ENCODE measurements at regions of chr1 and their contacts with region 1.

Region 1: GRCh38 chr1:183622884-183623785 is 12.4 kb downstream of the ARPC5 start:
- DNase-seq: peak; percentile 70
- ATAC-seq: peak; percentile 78
- H3K4me3 ChIP-seq: no peak overlapping the region
- H3K27ac ChIP-seq: peak overlapping the region; percentile 63
- H3K4me1 ChIP-seq: peaks cover 32% of the 10 kb centered on the region
- H3K27me3 ChIP-seq: no peaks in the 10 kb centered on the region
- CTCF ChIP-seq: peak; percentile 87

Region 2: GRCh38 chr1:183551904-183552303 is 71.2 kb before region 1 on chr1:
- CTCF ChIA-PET with region 1: no interaction called
- POLR2A ChIA-PET with region 1: no interaction called
- intact Hi-C with region 1: loop called (anchors 5 kb)
- DNase-seq: no peak
- ATAC-seq: no peak
- H3K4me3 ChIP-seq: no peak overlapping the region
- H3K27ac ChIP-seq: no peak overlapping the region
- H3K4me1 ChIP-seq: no peaks in the 10 kb centered on the region
- H3K27me3 ChIP-seq: no peaks in the 10 kb centered on the region
- CTCF ChIP-seq: no peak

Region 3: GRCh38 chr1:183580281-183580682 is 42.9 kb before region 1 on chr1:
- CTCF ChIA-PET with region 1: no interaction called
- POLR2A ChIA-PET with region 1: no interaction called
- intact Hi-C with region 1: no loop called
- DNase-seq: peak; percentile 54
- ATAC-seq: peak; percentile 91
- H3K4me3 ChIP-seq: no peak overlapping the region
- H3K27ac ChIP-seq: no peak overlapping the region
- H3K4me1 ChIP-seq: no peaks in the 10 kb centered on the region
- H3K27me3 ChIP-seq: no peaks in the 10 kb centered on the region
- CTCF ChIP-seq: peak; percentile 45

Region 4: GRCh38 chr1:183609313-183609712 is 13.8 kb before region 1 on chr1:
- CTCF ChIA-PET with region 1: interaction called, 5 read pairs
- POLR2A ChIA-PET with region 1: interaction called, 4 read pairs
- intact Hi-C with region 1: loop called (anchors 2 kb)
- DNase-seq: peak; percentile 68
- ATAC-seq: peak; percentile 51
- H3K4me3 ChIP-seq: no peak overlapping the region
- H3K27ac ChIP-seq: peak overlapping the region; percentile 71
- H3K4me1 ChIP-seq: peaks cover 44% of the 10 kb centered on the region
- H3K27me3 ChIP-seq: no peaks in the 10 kb centered on the region
- CTCF ChIP-seq: peak; percentile 65

Measured in PC-3 (cell line).